ENCODE measurements at regions of chr10 and their contacts with region 1.

Region 1: GRCh38 chr10:42769653-42770052 is 12.9 kb upstream of the BMS1 start:
- DNase-seq: peak in 3 of 7 donors; percentile 34 to 54 (median 51)
- H3K4me3 ChIP-seq: no peak overlapping the region
- H3K27ac ChIP-seq: no peak overlapping the region
- H3K4me1 ChIP-seq: no peaks in the 10 kb centered on the region
- H3K27me3 ChIP-seq: no peaks in the 10 kb centered on the region
- CTCF ChIP-seq: no peak
- POLR2A ChIP-seq: no peak

Region 2: GRCh38 chr10:42646663-42647640 is 122.7 kb before region 1 on chr10:
- intact Hi-C with region 1: loop called in 1 of 2 experiments (anchors 10 kb)
- DNase-seq: no peak
- H3K4me3 ChIP-seq: no peak overlapping the region
- H3K27ac ChIP-seq: no peak overlapping the region
- H3K4me1 ChIP-seq: no peaks in the 10 kb centered on the region
- H3K27me3 ChIP-seq: no peaks in the 10 kb centered on the region
- CTCF ChIP-seq: no peak
- POLR2A ChIP-seq: no peak